HAP-1 (cell line): ENCODE measurements at regions of chr7 and their contacts with region 1.

Region 1: GRCh38 chr7:107150375-107151073 is 18.3 kb upstream of the HBP1 start:
- DNase-seq: peak; percentile 49 to 81
- H3K4me3 ChIP-seq: no peak overlapping the region
- H3K4me1 ChIP-seq: no peaks in the 10 kb centered on the region; the same call in 1 of the 2 replicates
- H3K27me3 ChIP-seq: no peaks in the 10 kb centered on the region

Region 2: DNA sequence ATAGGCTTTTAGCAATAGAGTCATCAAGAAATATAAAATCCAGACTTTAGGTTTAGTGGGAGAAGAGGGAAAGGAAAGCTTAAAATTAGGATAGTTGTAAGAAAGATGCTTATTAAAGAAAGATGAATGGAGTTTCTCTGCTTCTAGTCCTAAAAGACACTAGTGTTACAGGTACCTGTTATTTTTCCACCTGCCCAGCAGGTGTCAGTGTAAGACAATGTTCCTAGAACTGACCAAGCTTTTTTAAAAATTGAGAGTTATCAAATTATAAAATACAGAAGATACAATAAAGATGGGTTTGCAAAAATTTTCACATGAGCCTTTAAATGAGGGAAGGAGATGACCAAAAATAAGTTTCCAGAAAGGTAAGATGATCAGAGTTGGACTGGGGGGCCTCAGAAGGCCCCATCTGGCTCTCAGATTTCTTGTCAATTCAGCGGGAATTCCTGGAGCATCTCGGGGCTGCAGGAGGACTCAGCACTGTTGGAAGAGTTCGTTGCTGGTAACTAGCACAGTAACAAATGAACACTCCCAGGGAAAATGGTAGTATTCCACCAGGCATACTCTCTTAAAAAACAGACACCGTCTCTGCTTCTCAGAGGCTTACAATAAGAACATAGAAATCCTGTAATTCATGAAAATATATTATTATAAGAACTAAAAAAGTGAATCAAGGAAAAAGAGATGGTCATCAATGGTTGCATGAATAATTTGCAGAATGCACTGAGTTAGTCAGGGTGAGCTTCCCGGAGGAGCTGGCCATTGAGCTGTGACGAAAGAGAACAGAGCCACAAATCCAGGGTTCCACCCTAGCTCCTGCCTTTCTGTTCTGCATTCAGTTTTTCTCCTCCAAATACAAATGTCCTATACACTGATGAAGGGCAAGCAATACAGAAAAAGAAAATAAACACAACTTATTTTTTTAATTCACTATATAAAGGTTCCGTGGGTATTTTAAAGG is 357.2 kb before region 1 on chr7:
- in situ Hi-C with region 1: loop called (anchors 10 kb)
- DNase-seq: peak; percentile 25 to 33
- H3K4me3 ChIP-seq: no peak overlapping the region
- H3K4me1 ChIP-seq: peaks cover 13% of the 10 kb centered on the region
- H3K27me3 ChIP-seq: no peaks in the 10 kb centered on the region

Region 3: GRCh38 chr7:106952658-106953231 is 197.8 kb before region 1 on chr7:
- in situ Hi-C with region 1: loop called (anchors 5 kb)
- DNase-seq: no peak
- H3K4me3 ChIP-seq: no peak overlapping the region
- H3K4me1 ChIP-seq: no peaks in the 10 kb centered on the region
- H3K27me3 ChIP-seq: no peaks in the 10 kb centered on the region